T-cell (primary cell): ENCODE measurements at regions of chr2 and their contacts with region 1.

Region 1: DNA sequence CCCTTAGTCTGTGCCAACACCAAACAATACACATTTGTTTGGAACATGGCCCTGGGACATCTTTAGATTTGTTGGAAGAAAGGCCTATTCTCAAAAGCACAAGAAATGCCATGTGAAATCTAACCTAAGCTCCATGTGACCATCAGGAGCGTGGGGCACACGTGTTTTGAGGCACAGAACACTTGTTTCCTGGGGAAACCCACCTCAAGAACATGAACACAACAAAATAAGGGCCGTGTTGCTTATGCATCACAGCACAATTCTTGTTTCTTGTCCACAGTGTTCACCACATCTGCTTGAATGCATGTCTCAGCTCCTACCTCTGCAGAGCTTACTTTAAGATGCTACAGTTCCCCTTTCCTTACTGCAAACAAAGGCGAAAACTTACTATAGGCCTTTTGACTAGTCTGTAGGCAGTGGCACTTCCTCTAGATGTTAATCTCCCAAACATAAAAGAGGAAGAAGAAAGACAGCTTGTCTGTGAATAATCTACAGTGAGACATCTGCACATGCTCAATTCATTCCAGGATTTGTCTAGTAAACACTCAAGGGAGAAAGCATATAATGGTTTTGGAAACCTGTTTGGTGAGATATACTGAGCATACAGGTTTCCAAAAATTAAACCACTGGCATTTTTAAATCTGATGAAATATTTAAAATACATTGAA is 165.0 kb downstream of the ANKRD44 start:
- DNase-seq: peak in 25 of 35 experiments; percentile 4 to 67 (median 22)
- ATAC-seq: peak; percentile 91 to 94 (median 93)
- H3K4me3 ChIP-seq: no peak overlapping the region
- H3K4me3 Mint-ChIP-seq: peak overlapping the region in 2 of 3 donors; percentile 13 to 44
- H3K27ac ChIP-seq: peak overlapping the region; percentile 66
- H3K27ac Mint-ChIP-seq: peak overlapping the region; percentile 90 to 95
- H3K4me1 ChIP-seq: peaks cover 45 to 61% of the 10 kb centered on the region in 2 experiments
- H3K4me1 Mint-ChIP-seq: peaks cover 82 to 87% (median 84%) of the 10 kb centered on the region in 3 donors
- H3K27me3 ChIP-seq: no peaks in the 10 kb centered on the region
- H3K27me3 Mint-ChIP-seq: no peaks in the 10 kb centered on the region

Region 2: DNA sequence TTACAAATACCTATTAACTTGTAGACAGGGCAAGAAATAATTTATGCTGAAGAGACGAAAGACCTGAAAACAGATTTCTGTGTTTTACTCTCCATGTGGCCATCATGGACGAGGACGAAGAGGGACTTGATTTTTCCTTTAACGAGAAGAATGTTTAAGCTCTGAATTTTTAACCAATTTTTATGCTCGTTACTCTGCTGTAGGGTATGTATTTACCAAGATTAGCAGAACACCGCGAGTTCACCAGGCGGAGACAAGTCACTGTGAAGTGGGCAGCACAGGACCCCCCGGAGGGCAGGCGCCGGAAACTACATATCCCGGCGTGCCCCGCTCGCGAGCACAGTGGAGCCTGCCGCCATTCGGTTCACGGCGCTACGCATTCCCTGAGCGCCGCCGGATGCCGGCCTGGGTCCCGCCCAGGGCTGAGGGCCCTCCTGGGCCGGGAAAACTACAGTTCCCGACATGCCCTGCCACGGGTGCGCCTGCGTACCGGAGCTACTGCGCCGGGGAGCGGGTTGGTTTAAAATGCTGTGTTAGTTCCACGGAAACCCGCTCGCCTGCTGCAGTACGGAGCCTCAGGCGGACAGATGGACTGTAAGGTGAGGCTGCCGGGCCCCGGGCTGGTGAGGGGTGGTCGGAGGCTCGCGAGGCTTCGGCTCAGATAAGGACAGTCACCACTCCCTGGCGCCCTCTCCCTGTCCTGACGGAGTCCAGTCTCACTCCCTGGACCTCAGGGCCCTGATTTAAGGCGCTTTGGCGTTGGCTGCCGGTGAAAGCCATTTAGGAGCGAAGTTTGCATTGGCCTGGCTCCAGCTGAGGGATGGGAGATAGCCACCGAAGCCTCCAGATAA is 506.2 kb before region 1 on chr2 and contains the start of gene CCDC150:
- CTCF ChIA-PET with region 1: no interaction called
- POLR2A ChIA-PET with region 1: no interaction called
- DNase-seq: peak; percentile 88 to 96 (median 93)
- ATAC-seq: peak; percentile 100
- H3K4me3 ChIP-seq: peak within 1 kb of the TSS; percentile 58 to 79
- H3K4me3 Mint-ChIP-seq: peak within 1 kb of the TSS; percentile 82 to 90 (median 83)
- H3K27ac ChIP-seq: no peak within 1 kb of the TSS
- H3K27ac Mint-ChIP-seq: peak within 1 kb of the TSS; percentile 36 to 46
- H3K4me1 ChIP-seq: peaks cover 6 to 12% of the 10 kb centered on the region in 2 experiments
- H3K4me1 Mint-ChIP-seq: peaks cover 13 to 22% (median 21%) of the 10 kb centered on the region in 3 donors
- H3K27me3 ChIP-seq: no peaks in the 10 kb centered on the region
- H3K27me3 Mint-ChIP-seq: no peaks in the 10 kb centered on the region
- total RNA-seq, gene CCDC150: 0.60 to 1.9 (median 1.1) TPM

Region 3: DNA sequence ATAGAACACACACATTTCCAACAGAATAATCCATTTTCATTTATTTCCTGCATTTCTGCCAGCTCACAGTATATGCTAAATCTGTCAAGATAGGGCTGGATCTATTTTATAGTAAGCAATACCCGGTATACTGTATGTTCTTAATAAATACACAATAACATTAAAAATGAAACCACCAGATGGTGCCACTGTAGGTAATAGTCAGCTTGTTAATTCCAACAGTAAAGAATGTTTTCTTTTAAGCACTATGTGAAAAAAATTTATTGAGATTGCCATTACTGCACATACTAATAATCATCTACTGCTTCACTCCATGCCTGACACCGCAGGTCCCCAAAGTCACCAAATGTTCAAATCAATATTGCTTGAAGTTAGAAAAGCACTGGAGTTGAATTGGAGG is 87.6 kb before region 1 on chr2:
- CTCF ChIA-PET with region 1: no interaction called
- POLR2A ChIA-PET with region 1: no interaction called
- DNase-seq: no peak
- ATAC-seq: no peak
- H3K4me3 ChIP-seq: no peak overlapping the region
- H3K4me3 Mint-ChIP-seq: no peak overlapping the region
- H3K27ac ChIP-seq: no peak overlapping the region
- H3K27ac Mint-ChIP-seq: peak overlapping the region in 1 of 2 donors; percentile 64
- H3K4me1 ChIP-seq: peaks cover 0 to 10% of the 10 kb centered on the region in 2 experiments
- H3K4me1 Mint-ChIP-seq: peaks cover 29 to 45% (median 31%) of the 10 kb centered on the region in 3 donors
- H3K27me3 ChIP-seq: no peaks in the 10 kb centered on the region
- H3K27me3 Mint-ChIP-seq: no peaks in the 10 kb centered on the region

Region 4: GRCh38 chr2:197168705-197169104 is 23.1 kb after region 1 on chr2:
- CTCF ChIA-PET with region 1: interaction called, 6 to 8 read pairs
- POLR2A ChIA-PET with region 1: interaction called in 1 of 2 experiments, 10 read pairs
- DNase-seq: peak; percentile 36 to 82 (median 65)
- ATAC-seq: peak; percentile 69 to 86 (median 72)
- H3K4me3 ChIP-seq: no peak overlapping the region
- H3K4me3 Mint-ChIP-seq: peak overlapping the region in 1 of 3 donors; percentile 9
- H3K27ac ChIP-seq: peak overlapping the region; percentile 16
- H3K27ac Mint-ChIP-seq: peak overlapping the region; percentile 72
- H3K4me1 ChIP-seq: peaks cover 9 to 42% of the 10 kb centered on the region in 2 experiments
- H3K4me1 Mint-ChIP-seq: peaks cover 73 to 88% (median 80%) of the 10 kb centered on the region in 3 donors
- H3K27me3 ChIP-seq: no peaks in the 10 kb centered on the region
- H3K27me3 Mint-ChIP-seq: no peaks in the 10 kb centered on the region